Activated CD4-positive, alpha-beta memory T cell treated with anti-CD3 and anti-CD28 coated beads for 36 hours (primary cell): ENCODE measurements at regions of chr17 and their contacts with region 1.

Region 1: DNA sequence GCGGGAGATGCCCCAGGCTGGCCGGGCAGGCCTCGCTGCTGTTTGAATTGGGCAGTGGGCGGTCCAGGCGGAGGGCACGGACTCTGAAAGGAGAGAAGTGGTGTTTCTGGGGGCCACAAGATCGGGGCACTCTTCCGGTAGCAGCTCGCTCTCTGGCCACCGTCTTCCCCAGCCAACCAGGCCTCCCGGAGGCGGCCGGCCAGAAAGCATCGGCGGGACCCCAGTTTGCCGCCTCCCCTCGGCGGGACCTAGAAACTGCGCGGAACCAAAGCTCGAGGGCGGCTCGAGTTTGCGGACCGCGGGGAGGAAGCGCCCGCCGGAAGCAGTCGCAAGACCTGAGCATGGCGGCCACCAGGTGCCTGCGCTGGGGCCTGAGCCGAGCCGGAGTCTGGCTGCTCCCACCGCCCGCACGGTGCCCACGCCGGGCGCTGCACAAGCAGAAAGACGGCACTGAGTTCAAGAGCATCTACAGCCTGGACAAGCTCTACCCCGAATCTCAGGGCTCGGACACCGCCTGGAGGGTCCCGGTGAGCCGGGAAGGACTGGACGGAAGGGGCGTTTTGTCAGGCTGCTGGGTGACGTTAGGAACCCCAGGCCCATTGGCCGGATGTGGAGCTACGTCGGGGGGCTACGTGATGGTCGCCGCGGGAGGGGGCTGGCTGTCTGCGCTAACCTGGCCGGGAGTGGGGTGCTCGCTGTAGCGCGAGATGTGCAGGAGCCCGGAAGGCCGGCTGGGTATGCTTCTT is at the start of gene MRPL58:
- DNase-seq: peak; percentile 90
- H3K4me3 Mint-ChIP-seq: peak within 1 kb of the TSS; percentile 98
- H3K27ac Mint-ChIP-seq: peak within 1 kb of the TSS; percentile 82
- H3K4me1 Mint-ChIP-seq: peaks cover 31% of the 10 kb centered on the region
- H3K27me3 Mint-ChIP-seq: no peaks in the 10 kb centered on the region
- total RNA-seq, gene MRPL58: 57.7 TPM

Region 2: GRCh38 chr17:74923533-74924249 is 88.8 kb before region 1 on chr17:
- CTCF ChIA-PET with region 1: no interaction called
- POLR2A ChIA-PET with region 1: no interaction called
- intact Hi-C with region 1: no loop called
- DNase-seq: peak; percentile 78
- H3K4me3 Mint-ChIP-seq: no peak overlapping the region
- H3K27ac Mint-ChIP-seq: no peak overlapping the region
- H3K4me1 Mint-ChIP-seq: peaks cover 6% of the 10 kb centered on the region
- H3K27me3 Mint-ChIP-seq: peaks cover 48% of the 10 kb centered on the region

Region 3: DNA sequence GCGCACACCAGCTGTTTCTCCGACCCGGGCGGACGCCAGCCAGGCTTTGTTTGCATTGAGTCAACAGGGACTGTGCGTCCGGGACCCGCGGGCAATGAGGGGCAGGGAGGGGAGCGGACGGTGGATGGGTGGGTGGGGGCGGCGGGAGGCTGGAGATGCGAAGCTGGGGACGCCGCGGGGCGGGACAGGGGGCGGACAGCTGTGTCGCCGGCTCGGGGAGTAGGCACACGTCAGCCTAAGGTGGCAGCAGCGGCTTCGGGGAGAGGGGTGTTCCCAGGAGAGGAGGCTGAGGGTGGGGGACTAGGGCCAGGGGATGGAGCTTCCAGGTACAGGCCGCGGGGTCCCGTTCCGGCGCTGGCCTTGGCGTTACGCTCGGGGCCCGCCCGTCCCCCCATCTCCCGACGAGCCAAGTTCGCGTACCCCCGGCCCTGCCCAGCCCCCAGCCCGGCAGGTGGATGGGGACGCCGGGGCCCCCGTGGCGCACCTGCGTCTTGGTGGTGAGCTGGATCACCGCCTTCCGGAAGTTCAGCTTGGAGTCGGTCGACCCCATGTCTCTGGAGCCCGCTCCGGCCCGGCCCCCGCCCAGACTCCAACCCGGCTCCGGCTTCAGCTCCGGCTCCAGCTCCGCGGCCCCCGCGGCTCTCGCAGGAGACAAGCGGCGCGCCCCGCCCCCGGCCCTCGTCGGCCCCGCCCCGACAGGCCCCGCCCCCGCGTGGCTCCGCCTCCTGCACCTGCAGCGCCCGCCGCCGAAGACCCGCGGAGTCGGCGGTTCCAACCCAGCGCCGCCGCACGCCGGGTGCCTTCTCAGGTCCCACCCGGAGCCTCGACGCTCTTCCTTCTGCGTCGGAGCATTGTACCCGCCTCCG is 40.2 kb before region 1 on chr17 and contains the start of gene HID1:
- CTCF ChIA-PET with region 1: interaction called, 15 read pairs
- POLR2A ChIA-PET with region 1: interaction called, 4 read pairs
- intact Hi-C with region 1: no loop called
- DNase-seq: peak; percentile 82
- H3K4me3 Mint-ChIP-seq: peak within 1 kb of the TSS; percentile 73
- H3K27ac Mint-ChIP-seq: no peak within 1 kb of the TSS
- H3K4me1 Mint-ChIP-seq: peaks cover 5% of the 10 kb centered on the region
- H3K27me3 Mint-ChIP-seq: peaks cover 10% of the 10 kb centered on the region
- total RNA-seq, gene HID1: 2.3 to 2.6 TPM

Region 4: DNA sequence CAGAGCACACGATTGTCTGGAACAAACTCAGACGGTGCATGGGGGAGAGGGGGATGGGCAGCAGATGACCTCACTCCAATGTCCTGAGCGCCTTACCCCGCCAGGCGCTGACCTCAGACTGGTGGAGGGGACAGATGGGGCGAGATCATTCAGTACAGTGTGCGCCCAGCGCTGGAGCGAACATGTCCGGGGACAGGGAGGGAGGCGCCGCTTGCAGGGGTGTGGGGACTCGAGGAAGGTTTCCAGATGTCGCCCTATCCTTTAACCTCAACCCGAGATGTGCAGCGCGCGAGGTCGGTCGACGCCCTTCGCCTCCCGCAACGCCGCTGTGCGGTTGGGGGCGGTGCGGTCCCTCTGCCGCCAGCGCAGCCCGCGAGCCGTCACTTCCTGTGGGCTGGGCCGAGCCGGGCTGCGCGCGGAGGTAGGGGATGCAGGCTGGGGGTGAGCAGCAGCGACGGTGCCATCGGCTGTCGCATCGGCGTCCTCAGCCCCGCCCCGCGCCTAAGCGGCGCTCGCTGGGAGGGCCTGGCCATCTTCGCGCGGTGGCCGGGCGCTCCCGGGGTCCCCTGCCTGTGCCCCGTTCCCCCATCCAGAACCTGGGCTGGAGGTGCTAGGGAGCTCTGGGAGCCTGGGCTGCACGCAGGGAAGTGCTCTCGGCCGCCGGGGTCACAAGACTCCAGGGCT is 30.4 kb before region 1 on chr17:
- CTCF ChIA-PET with region 1: interaction called, 13 read pairs
- POLR2A ChIA-PET with region 1: interaction called, 7 read pairs
- intact Hi-C with region 1: loop called (anchors 2 kb)
- DNase-seq: peak; percentile 87
- H3K4me3 Mint-ChIP-seq: peak overlapping the region; percentile 77
- H3K27ac Mint-ChIP-seq: peak overlapping the region; percentile 61
- H3K4me1 Mint-ChIP-seq: peaks cover 14% of the 10 kb centered on the region
- H3K27me3 Mint-ChIP-seq: peaks cover 1% of the 10 kb centered on the region

Region 5: GRCh38 chr17:74987418-74987908 is 25.1 kb before region 1 on chr17 and contains the start of gene CDR2L:
- CTCF ChIA-PET with region 1: interaction called, 13 read pairs
- POLR2A ChIA-PET with region 1: interaction called, 7 read pairs
- intact Hi-C with region 1: loop called (anchors 2 kb)
- DNase-seq: peak; percentile 95
- H3K4me3 Mint-ChIP-seq: peak within 1 kb of the TSS; percentile 73
- H3K27ac Mint-ChIP-seq: no peak within 1 kb of the TSS
- H3K4me1 Mint-ChIP-seq: peaks cover 6% of the 10 kb centered on the region
- H3K27me3 Mint-ChIP-seq: peaks cover 4% of the 10 kb centered on the region
- total RNA-seq, gene CDR2L: 1.1 to 1.3 TPM

Region 6: GRCh38 chr17:75024686-75025397 is 12.3 kb after region 1 on chr17:
- CTCF ChIA-PET with region 1: interaction called, 5 read pairs
- POLR2A ChIA-PET with region 1: interaction called, 11 read pairs
- intact Hi-C with region 1: no loop called
- DNase-seq: peak; percentile 58
- H3K4me3 Mint-ChIP-seq: peak overlapping the region; percentile 20
- H3K27ac Mint-ChIP-seq: no peak overlapping the region
- H3K4me1 Mint-ChIP-seq: peaks cover 12% of the 10 kb centered on the region
- H3K27me3 Mint-ChIP-seq: no peaks in the 10 kb centered on the region

Region 7: DNA sequence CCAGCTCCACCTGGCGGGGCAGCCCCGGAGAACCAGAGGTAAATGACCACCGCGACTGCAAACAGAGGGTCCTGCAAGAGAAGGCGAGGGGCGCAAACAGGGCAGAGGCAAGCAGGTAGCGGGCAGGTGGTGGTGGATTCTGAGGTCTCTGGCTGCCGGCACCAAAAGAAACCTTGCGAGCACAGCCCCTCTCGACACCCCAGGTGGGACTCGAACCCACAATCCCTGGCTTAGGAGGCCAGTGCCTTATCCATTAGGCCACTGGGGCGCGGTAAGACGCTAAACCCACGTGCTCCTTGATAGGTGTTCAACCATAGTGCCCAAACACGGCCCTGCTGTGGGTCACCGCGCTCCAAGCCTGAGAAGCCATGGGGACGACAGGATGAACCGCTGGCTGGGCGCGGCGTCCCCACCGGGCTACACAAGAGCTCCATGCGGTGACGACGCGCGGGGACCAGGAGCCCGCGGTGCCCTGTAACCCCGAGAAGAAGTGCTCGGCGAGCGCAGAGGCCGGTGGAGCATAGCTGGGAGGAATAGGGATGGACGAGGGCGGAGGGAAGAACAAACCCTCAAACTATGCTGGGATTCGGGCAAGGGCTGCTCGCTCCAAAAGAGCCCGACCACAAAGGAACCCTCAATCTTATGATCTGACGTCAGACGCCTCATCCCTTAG is 21.9 kb after region 1 on chr17:
- CTCF ChIA-PET with region 1: interaction called, 11 read pairs
- POLR2A ChIA-PET with region 1: interaction called, 9 read pairs
- intact Hi-C with region 1: loop called (anchors 2 kb)
- DNase-seq: peak; percentile 95
- H3K4me3 Mint-ChIP-seq: peak overlapping the region; percentile 97
- H3K27ac Mint-ChIP-seq: peak overlapping the region; percentile 96
- H3K4me1 Mint-ChIP-seq: peaks cover 49% of the 10 kb centered on the region
- H3K27me3 Mint-ChIP-seq: peaks cover 4% of the 10 kb centered on the region

Region 8: DNA sequence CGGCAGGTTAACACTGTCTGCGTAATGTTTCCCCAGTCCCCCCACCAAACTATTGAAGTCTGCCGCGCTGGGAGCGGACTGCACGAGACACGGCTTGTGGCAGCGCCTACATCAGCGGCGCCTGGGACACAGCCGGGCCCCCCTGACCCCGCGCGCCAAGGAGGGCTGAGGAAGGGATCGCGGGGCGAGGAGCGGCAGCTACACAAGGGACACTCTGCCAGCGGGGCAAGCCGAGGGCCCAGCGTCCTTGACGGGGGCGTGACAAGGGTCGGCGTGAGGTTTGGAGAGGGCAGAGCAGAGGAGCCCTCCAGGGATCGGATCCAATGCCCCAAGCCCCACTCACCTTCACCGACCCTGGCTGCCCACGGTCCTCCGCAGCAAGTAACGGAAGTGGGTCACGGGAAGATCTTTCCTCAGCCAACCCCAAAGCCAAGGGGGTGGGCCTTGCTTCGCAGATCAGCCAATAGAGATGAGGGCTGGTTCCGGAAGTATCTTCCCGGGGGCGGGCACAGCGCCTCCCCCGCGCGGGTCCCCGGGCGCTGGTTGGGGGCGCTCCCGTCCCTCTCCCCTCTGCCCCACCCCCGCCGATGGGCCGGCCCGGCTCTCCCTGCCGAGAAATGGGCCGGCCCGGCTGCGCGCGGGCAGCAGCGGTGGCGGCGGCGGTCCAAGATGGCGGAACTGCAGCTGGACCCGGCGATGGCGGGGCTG is 34.2 kb after region 1 on chr17 and contains the starts of genes ATP5PD and KCTD2:
- CTCF ChIA-PET with region 1: interaction called, 3 read pairs
- POLR2A ChIA-PET with region 1: interaction called, 19 read pairs
- intact Hi-C with region 1: loop called (anchors 5 kb)
- DNase-seq: peak; percentile 98
- H3K4me3 Mint-ChIP-seq: peak within 1 kb of the TSS; percentile 97
- H3K27ac Mint-ChIP-seq: peak within 1 kb of the TSS; percentile 91
- H3K4me1 Mint-ChIP-seq: peaks cover 42% of the 10 kb centered on the region
- H3K27me3 Mint-ChIP-seq: no peaks in the 10 kb centered on the region
- total RNA-seq, gene ATP5PD: 249 to 261 TPM
- total RNA-seq, gene KCTD2: 20.6 to 23.3 TPM

Region 9: DNA sequence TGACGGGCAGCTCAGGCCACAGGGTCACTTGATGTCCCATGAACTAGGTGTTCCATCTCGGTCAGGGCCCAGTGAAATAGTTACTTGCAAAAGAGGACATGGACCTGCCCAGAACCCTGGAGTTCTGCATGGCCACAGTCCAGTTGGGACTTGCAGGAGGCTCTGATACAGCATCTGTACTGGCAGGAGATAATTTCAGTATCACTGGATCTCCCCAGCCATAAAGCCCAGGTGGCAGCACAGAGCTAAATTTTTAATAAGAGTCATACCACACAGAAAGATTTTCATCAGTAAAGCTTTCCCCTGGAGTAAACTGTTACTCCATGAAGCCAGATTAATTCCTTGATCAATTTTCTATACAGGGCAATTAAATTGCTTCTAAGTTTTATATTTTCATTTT is 57.3 kb after region 1 on chr17:
- CTCF ChIA-PET with region 1: no interaction called
- POLR2A ChIA-PET with region 1: no interaction called
- intact Hi-C with region 1: no loop called
- DNase-seq: no peak
- H3K4me3 Mint-ChIP-seq: no peak overlapping the region
- H3K27ac Mint-ChIP-seq: no peak overlapping the region
- H3K4me1 Mint-ChIP-seq: peaks cover 32% of the 10 kb centered on the region
- H3K27me3 Mint-ChIP-seq: no peaks in the 10 kb centered on the region

Region 10: GRCh38 chr17:75096082-75096625 is 83.6 kb after region 1 on chr17:
- CTCF ChIA-PET with region 1: no interaction called
- POLR2A ChIA-PET with region 1: no interaction called
- intact Hi-C with region 1: no loop called
- DNase-seq: no peak
- H3K4me3 Mint-ChIP-seq: no peak overlapping the region
- H3K27ac Mint-ChIP-seq: no peak overlapping the region
- H3K4me1 Mint-ChIP-seq: no peaks in the 10 kb centered on the region
- H3K27me3 Mint-ChIP-seq: no peaks in the 10 kb centered on the region

Region 11: DNA sequence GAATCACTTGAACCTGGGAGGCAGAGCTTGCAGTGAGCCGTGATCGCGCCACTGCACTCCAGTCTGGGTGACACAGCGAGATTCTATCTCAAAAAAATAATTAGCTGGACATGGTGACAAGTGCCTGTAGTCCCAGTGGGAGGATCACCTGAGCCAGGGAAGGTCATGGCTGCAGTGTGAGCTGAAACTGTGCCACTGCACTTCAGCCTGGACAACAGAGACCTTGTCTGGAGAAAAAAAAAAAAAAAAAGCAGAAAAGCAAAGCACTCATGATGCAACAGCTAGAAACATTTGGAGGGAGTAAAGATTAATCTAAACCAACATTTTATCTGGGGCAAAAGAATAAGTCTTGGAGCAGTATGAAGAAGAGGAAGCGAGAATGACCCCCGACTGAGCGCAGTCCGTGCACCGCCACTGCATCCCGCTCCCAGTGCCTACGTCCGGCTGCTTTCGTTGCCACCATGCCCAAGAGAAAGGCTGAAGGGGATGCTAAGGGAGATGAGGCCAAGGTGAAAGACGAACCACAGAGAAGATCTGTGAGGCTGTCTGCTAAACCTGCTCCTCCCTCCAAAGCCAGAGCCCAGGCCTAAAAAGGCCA is 1333.0 kb after region 1 on chr17:
- CTCF ChIA-PET with region 1: no interaction called
- POLR2A ChIA-PET with region 1: no interaction called
- intact Hi-C with region 1: no loop called
- DNase-seq: no peak
- H3K4me3 Mint-ChIP-seq: no peak overlapping the region
- H3K27ac Mint-ChIP-seq: no peak overlapping the region
- H3K4me1 Mint-ChIP-seq: no peaks in the 10 kb centered on the region
- H3K27me3 Mint-ChIP-seq: no peaks in the 10 kb centered on the region